Dorsolateral prefrontal cortex (tissue), 120 donors: ENCODE measurements at regions of chr10 and their contacts with region 1.

Region 1: GRCh38 chr10:121194696-121195523 is 343.7 kb downstream of the WDR11 start:
- DNase-seq: no peak
- H3K4me3 ChIP-seq: no peak overlapping the region
- H3K27ac ChIP-seq: no peak overlapping the region
- H3K27me3 ChIP-seq: peaks cover 0 to 2% (median 0%) of the 10 kb centered on the region in 45 donors
- CTCF ChIP-seq: no peak

Region 2: GRCh38 chr10:121112579-121113386 is 82.1 kb before region 1 on chr10:
- intact Hi-C with region 1: no loop called
- DNase-seq: no peak
- H3K4me3 ChIP-seq: no peak overlapping the region
- H3K27ac ChIP-seq: no peak overlapping the region
- H3K27me3 ChIP-seq: peaks cover 0 to 4% (median 0%) of the 10 kb centered on the region in 45 donors
- CTCF ChIP-seq: no peak

Region 3: DNA sequence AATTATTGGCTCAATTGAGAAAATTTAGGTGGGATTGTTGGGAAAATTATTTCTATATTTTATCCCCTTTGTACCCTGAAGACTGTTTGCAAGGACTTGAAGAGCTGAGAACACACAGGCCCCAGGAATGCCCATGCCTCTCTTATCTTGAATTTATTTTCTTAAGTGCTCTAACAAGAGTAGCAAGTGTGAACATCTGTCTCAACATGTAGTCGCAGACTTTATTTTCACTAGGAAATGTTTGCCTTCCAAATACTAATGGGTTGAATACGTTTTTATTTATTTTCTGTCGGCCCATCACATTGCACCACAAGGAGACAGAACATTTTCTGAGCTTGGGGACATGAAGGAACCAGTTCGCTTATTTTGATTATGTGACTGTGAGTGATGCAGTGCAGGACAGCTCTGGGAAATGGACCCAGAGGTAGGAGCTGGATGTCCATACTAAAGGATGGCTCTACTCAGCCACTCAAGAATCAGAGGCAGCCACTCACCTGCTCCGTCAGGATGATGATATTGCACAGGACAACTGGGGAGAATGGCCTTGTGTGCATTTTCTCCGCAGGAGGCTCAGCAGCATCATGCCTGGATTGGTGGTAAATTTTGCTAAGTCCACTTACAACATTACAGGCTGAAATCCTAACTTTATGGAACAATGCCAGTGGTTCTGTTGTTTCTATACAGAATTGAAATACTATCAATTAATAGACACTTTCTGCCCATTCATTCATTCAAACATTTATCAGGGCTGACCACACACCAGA is 70.6 kb after region 1 on chr10:
- intact Hi-C with region 1: no loop called
- DNase-seq: no peak
- H3K4me3 ChIP-seq: no peak overlapping the region
- H3K27ac ChIP-seq: no peak overlapping the region
- H3K27me3 ChIP-seq: peaks cover 0 to 4% (median 0%) of the 10 kb centered on the region in 45 donors
- CTCF ChIP-seq: no peak

Region 4: DNA sequence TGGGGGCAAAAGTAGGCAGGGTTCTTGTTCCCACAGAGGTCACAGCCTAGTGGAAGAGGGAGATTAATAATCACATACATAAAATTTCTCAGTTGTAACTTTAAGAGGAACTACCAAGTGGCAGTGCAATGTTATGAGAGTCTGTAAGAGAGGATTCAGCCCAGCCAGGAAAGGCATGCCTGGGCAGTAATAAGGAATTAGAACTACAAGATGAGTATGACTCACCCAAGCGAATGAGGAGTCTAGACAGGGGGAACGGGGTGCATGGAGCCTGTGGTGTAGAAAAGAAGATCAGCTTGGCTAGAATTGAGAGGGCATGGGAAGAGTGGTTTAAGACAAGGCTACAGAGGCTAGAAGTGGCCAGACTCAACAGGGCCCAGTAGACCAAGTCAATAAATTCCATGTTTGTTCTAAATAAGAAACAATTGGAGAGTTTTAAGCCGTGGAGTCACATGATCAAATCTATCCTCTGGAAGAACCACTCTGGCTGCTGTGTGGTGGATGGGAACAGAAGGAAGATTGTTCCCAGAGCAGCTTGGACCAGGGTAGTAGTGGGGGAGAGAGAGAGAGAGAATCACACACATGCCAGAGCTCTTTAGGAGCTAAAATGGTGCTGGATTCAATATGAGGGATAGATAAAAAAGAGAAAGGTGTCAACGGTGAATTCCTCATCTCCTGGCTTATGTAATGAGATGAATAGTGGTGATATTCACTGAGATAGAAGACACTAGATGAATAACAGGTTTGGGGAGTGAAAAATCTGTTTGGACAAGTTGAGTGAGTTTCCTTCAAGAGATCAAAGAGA is 138.1 kb after region 1 on chr10:
- intact Hi-C with region 1: no loop called
- DNase-seq: peak in 1 of 10 donors; percentile 14
- H3K4me3 ChIP-seq: no peak overlapping the region
- H3K27ac ChIP-seq: peak overlapping the region in 30 of 59 donors; percentile 1 to 87 (median 54)
- H3K27me3 ChIP-seq: peaks cover 0 to 3% (median 0%) of the 10 kb centered on the region in 45 donors
- CTCF ChIP-seq: no peak

Region 5: DNA sequence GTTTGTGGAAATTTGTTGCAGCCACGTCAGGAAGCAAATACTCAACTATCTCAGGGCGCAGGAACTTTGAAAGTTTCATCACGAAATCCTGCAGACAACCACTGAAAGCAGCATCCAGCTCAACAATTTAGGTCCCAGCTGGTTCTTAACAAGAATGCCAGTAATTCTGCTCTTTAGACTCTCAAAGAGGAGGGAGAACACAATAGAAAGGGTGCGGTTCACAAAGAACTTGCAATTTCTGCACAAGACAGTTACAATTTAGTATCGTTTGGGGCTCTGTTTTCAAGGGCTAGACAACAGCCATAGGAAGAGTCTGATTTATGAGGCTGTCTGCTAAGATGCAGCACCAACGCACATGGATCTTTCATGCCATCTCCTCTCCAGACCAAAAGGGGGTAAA is 180.3 kb after region 1 on chr10:
- intact Hi-C with region 1: no loop called
- DNase-seq: no peak
- H3K4me3 ChIP-seq: no peak overlapping the region
- H3K27ac ChIP-seq: no peak overlapping the region
- H3K27me3 ChIP-seq: peaks cover 0 to 3% (median 0%) of the 10 kb centered on the region in 45 donors
- CTCF ChIP-seq: no peak

Region 6: DNA sequence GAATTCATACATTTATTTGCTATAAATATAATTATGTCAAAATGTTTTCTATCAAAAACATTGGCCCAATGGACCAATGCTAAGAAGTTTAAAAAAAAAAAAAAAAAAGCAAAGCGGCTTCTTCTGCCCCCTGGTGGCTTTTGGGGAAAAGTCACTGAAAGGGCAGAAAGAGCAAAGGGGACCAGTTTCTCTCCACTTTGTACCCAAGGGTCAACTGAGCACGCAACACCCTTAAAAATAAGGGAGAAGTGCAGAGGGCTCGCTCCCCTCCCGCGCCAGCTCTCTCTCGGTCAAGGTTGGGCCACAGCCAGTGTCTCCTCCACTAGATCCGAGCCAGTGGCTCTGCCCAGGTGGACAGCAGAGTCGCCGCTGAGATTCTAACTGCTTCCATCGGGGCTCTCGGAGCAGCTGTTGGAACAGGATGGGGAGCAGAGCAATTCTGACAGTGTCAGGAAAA is 539.7 kb after region 1 on chr10:
- intact Hi-C with region 1: loop called in 1 of 2 experiments (anchors 10 kb)
- DNase-seq: peak in 2 of 10 donors; percentile 7 to 56
- H3K4me3 ChIP-seq: peak overlapping the region in 52 of 59 donors; percentile 8 to 61 (median 42)
- H3K27ac ChIP-seq: peak overlapping the region in 8 of 59 donors; percentile 5 to 60 (median 16)
- H3K27me3 ChIP-seq: no peaks in the 10 kb centered on the region
- CTCF ChIP-seq: peak; percentile 62 to 89 (median 83)